ENCODE measurements at regions of chr5 and their contacts with region 1.

Region 1: DNA sequence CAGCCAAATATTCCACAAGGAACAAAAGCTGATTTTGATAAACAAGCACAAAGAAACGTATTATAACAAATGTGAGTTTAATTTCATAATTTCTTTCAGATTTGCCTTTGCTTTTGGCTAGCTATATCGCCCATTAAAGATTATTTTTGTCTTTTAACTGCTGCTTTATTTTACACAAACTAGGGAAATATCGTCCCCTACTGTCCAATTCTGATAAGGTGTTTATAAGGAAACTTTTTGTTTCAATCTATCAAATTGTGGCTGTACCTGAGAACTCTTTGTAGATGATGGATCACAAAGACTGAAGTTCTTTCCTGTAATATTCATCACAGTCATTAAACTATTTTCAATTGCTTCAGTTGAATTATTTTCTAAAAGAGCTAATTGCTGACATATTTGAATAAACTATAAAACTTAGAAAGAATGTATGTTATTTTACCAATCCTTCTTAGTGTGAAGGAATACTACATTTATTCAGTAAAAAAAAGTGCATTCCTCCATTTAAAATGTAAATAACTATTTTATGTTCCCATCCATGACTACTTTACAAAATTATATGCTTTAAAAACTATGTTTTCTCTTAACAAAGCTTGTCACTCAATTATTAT is 431.3 kb upstream of the ITGA1 start:
- DNase-seq: peak in 1 of 2 experiments; percentile 12
- H3K4me3 ChIP-seq: no peak overlapping the region
- H3K4me3 Mint-ChIP-seq: no peak overlapping the region
- H3K27ac Mint-ChIP-seq: no peak overlapping the region
- H3K4me1 ChIP-seq: no peaks in the 10 kb centered on the region
- H3K4me1 Mint-ChIP-seq: no peaks in the 10 kb centered on the region
- H3K27me3 ChIP-seq: no peaks in the 10 kb centered on the region
- H3K27me3 Mint-ChIP-seq: no peaks in the 10 kb centered on the region
- CTCF ChIP-seq: peak; percentile 64 to 78

Region 2: GRCh38 chr5:51846015-51846414 is 510.4 kb before region 1 on chr5:
- CTCF ChIA-PET with region 1: no interaction called
- POLR2A ChIA-PET with region 1: no interaction called
- intact Hi-C with region 1: loop called (anchors 10 kb)
- DNase-seq: no peak
- H3K4me3 ChIP-seq: no peak overlapping the region
- H3K4me3 Mint-ChIP-seq: no peak overlapping the region
- H3K27ac Mint-ChIP-seq: no peak overlapping the region
- H3K4me1 ChIP-seq: no peaks in the 10 kb centered on the region
- H3K4me1 Mint-ChIP-seq: no peaks in the 10 kb centered on the region
- H3K27me3 ChIP-seq: no peaks in the 10 kb centered on the region
- H3K27me3 Mint-ChIP-seq: no peaks in the 10 kb centered on the region
- CTCF ChIP-seq: no peak

Region 3: DNA sequence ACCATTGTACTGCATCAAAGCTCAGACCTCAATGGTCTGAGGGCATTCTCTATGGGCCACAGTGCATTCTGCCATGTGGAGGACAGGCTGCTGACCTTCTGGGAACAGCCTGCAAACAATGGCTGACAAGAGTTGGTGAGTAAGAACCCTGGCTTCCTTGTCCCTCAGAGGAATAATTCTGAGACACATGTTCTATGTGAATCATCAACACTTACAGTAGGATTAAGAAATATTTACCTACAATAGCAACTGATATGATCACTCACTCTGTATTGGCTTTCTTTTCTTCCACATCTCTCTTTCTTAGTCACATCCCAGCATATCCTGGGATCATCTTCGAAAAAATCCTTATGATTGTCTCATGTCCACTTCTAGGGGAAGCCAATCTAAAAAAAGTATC is 124.8 kb after region 1 on chr5:
- CTCF ChIA-PET with region 1: no interaction called
- POLR2A ChIA-PET with region 1: no interaction called
- intact Hi-C with region 1: no loop called
- DNase-seq: no peak
- H3K4me3 ChIP-seq: no peak overlapping the region
- H3K4me3 Mint-ChIP-seq: no peak overlapping the region
- H3K27ac Mint-ChIP-seq: no peak overlapping the region
- H3K4me1 ChIP-seq: no peaks in the 10 kb centered on the region
- H3K4me1 Mint-ChIP-seq: no peaks in the 10 kb centered on the region
- H3K27me3 ChIP-seq: no peaks in the 10 kb centered on the region
- H3K27me3 Mint-ChIP-seq: peaks cover 5% of the 10 kb centered on the region
- CTCF ChIP-seq: no peak

Measured in Caco-2 (cell line).